BJ (cell line): ENCODE measurements at regions of chr19 and their contacts with region 1.

Region 1: GRCh38 chr19:41883821-41884733 is 1.1 kb downstream of the ARHGEF1 start:
- DNase-seq: peak; percentile 73
- H3K4me3 ChIP-seq: peak overlapping the region; percentile 99
- H3K27me3 ChIP-seq: no peaks in the 10 kb centered on the region
- CTCF ChIP-seq: peak; percentile 32; the same call in 1 of the 2 replicates

Region 2: GRCh38 chr19:41734617-41735016 is 149.5 kb before region 1 on chr19:
- CTCF ChIA-PET with region 1: no interaction called
- POLR2A ChIA-PET with region 1: no interaction called
- DNase-seq: no peak
- H3K4me3 ChIP-seq: no peak overlapping the region
- H3K27me3 ChIP-seq: no peaks in the 10 kb centered on the region
- CTCF ChIP-seq: no peak

Region 3: DNA sequence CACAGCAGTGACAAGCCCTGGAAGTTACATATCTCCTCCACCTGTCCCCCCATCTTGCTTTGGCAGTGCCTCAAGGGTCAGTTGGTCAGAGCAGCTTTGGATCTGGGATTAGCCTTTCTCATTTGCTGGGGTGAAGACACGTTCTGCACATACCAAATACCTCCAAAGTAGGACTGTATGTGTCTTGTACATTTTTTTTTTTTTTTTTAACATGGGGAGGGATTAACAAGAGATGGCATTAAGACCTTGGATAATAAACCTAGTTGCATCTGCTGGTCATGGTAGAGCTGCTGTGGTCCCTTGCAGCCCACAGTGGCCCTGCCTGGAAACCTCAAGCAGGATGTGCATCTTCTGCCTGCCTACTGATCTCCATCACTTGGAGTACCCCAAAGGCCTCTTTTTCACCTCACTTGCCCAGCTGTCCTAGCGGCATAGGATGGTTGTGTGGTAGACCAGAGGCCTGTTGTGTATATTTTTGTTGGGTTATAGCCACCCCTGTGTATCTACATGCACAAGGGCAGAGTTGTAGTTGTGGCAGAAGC is 21.6 kb before region 1 on chr19:
- CTCF ChIA-PET with region 1: no interaction called
- POLR2A ChIA-PET with region 1: no interaction called
- DNase-seq: no peak
- H3K4me3 ChIP-seq: no peak overlapping the region
- H3K27me3 ChIP-seq: no peaks in the 10 kb centered on the region
- CTCF ChIP-seq: no peak

Region 4: DNA sequence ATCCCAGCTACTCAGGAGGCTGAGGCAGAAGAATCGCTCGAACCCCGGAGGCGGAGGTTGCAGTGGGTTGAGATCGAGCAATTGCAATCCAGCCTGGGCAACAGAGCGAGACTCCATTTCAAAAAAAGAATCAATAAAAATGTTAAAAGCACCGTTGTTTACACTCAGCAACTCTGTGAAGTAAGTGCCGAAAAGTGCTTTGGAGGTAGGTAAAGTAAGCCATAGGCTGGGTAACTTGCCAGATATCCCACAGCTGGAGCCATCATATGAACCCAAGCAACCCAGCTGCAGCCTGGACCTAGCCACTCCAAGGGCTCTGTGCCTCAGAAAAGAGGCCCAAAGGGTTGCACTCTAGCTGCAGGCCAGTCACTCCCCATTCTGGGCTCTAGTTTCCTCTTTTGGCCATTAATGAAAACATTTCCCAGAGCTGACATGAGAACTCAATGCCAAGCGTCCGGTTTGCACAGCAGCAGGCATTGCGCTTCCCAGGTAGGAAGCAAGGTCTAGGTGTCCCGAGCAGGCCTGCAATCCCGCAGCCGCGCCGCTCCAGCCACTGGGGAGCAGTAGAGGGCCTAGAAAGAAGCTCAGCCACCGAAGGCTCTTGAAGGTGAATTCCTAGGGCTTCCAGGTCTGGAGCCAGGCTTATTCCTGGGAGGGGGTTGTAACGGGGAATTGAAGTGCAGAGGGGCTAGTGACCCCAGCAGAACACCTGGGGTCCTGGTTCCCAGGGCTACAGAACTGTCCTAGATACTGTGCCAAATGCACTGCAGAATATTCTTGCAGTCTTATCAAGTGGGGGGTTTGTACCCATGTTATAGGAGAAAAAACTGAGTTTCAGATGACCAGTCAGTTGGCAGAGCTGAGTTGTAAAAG is 11.1 kb before region 1 on chr19:
- CTCF ChIA-PET with region 1: interaction called, 7 read pairs
- POLR2A ChIA-PET with region 1: interaction called, 14 read pairs
- DNase-seq: no peak
- H3K4me3 ChIP-seq: no peak overlapping the region
- H3K27me3 ChIP-seq: no peaks in the 10 kb centered on the region
- CTCF ChIP-seq: peak; percentile 76

Region 5: DNA sequence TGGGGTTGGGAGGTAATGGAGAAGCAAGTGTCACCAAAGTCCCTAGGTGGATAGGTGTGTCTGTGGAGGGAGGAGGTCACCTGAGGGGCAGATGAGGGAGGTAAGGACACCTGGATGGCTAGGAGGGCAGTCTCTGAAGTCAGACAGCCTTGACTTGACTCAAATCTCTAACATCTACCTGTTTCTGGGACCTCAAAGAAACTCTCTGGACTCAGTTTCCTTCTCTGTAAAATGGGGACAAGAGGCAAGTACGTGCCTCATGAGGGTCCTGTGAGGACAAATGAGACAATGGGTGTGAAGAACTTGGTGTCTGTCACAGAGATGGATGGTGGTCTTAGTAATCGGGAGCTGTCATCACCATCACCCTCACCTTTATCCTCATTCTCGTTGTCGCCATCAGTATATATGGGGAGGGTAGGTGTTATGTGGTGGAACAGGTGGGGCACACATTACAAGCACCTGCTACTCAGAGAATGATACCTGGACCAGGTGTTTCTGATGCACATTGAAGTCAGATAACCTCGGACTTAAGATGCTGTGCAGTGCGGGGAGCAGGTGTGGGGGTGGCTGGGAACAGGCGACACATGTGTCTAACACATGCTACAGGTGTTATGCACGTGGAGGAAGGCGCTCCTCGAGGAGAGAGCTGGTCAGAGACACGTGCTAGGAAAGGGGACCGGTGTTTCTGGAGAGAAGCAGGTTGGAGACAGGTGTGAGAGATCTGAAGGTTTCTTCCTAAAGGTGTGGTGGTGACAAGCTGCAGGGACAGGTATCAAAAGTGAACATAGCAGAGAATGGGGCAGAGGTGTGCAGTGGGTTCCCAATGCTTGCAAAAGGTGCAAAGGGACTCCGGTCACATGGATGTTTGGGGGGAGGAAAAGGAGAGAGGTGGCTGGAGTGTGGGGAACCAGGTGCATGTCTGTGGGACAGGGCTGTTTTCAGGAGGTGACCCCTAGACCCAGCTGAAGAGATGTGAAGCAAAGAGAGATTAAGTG is 40.4 kb after region 1 on chr19:
- CTCF ChIA-PET with region 1: no interaction called
- POLR2A ChIA-PET with region 1: interaction called, 13 read pairs
- DNase-seq: no peak
- H3K4me3 ChIP-seq: no peak overlapping the region
- H3K27me3 ChIP-seq: peaks cover 57% of the 10 kb centered on the region
- CTCF ChIP-seq: no peak